Heart left ventricle (tissue), 16 donors: ENCODE measurements at regions of chr19 and their contacts with region 1.

Region 1: DNA sequence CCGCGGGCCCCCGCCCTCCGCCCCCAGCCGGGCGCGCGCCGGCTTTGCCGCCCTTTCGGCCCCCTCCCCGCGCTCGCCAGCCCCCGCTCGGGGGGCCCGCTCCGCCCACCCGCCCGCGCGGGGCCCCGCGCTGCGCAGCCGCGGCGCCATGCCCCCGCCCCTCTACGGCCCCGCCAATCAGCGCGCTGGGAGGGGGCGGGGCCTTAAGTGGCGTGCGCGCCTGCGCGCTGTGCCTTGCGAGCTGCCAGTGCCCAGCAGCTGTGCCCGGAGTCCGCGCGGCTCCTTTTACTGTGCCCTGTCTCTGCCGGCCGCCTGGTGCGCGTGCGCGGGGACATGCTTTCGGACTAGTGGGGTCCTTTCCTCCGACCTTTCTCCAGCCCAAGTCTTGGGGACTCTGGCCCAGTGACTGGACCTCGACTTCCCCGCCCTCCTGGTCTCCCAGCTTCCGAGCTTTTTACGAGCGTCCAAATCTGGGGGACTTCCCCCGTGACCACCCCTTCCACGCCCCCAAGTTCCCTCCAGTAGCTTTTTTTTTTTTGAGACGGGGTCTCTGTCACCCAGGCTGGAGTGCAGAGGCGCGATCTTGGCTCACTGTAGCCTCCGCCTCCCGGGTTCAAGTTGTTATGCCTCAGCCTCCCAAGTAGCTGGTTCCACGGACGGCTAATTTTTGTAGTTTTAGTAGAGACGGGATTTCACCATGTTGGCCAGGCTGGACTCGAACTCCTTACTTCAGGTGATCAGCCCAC is at the start of gene MBD3:
- DNase-seq: peak; percentile 91 to 96 (median 94)
- ATAC-seq: peak; percentile 91 to 97 (median 93)
- H3K4me3 ChIP-seq: peak within 1 kb of the TSS; percentile 66 to 92 (median 80)
- H3K27ac ChIP-seq: peak within 1 kb of the TSS; percentile 85 to 100 (median 98)
- H3K4me1 ChIP-seq: peaks cover 3 to 38% (median 21%) of the 10 kb centered on the region in 12 donors
- H3K27me3 ChIP-seq: no peaks in the 10 kb centered on the region
- CTCF ChIP-seq: no peak
- POLR2A ChIP-seq: peak in 1 of 2 donors; percentile 74
- total RNA-seq, gene MBD3: 38.6 to 107 (median 62.5) TPM

Region 2: DNA sequence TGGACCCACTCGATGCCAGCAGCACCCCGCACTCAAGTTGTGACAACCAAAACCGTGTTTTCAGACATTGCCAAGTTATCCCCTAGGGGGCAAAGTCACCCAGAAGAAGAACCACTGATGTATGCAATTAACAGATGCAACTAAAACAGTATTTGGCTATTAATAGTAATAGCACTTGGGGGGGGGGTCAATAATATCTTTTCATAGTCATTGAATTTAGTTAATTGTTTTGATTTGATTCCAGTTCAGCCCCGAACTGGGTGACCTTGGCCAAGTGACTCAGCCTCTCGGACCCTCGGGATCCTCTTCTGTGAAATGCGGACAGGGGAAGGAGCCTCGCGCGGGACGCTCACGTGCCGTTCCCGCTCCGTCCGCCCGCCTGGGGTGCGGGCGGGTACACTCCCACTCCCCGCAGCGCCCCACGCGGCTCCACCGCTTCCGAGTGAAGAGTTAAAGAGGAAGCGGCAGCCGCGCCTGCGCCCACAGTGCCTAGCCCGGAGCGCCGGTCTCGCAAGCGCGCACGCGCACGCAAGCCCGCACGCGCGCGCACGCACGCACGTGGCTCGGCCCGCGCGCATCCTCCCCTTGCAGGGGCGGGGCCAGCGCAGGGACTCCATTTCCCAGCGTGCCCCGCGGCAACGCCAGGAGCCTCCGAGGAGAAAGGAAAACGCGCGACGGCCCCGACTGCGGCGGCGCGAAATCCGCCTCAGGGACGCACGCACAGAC is 186.0 kb before region 1 on chr19:
- intact Hi-C with region 1: loop called in 1 of 10 experiments (anchors 5 kb)
- DNase-seq: peak; percentile 99 to 100 (median 100)
- ATAC-seq: peak; percentile 89 to 92 (median 90)
- H3K4me3 ChIP-seq: peak overlapping the region in 11 of 12 donors; percentile 31 to 100 (median 85)
- H3K27ac ChIP-seq: peak overlapping the region; percentile 39 to 98 (median 84)
- H3K4me1 ChIP-seq: peaks cover 24 to 54% (median 38%) of the 10 kb centered on the region in 12 donors
- H3K27me3 ChIP-seq: peaks cover 0 to 13% (median 0%) of the 10 kb centered on the region in 9 donors
- CTCF ChIP-seq: peak in 8 of 12 donors; percentile 22 to 46 (median 30)
- POLR2A ChIP-seq: peak in 1 of 2 donors; percentile 71